Breast epithelium (tissue), 4 donors: ENCODE measurements at regions of chr13 and their contacts with region 1.

Region 1: GRCh38 chr13:108297114-108297513 is 27.6 kb downstream of the TNFSF13B start:
- DNase-seq: no peak
- H3K4me3 ChIP-seq: no peak overlapping the region
- H3K27ac ChIP-seq: no peak overlapping the region
- H3K4me1 ChIP-seq: no peaks in the 10 kb centered on the region
- H3K27me3 ChIP-seq: no peaks in the 10 kb centered on the region
- CTCF ChIP-seq: no peak
- POLR2A ChIP-seq: no peak

Region 2: GRCh38 chr13:108283110-108283509 is 14.0 kb before region 1 on chr13:
- intact Hi-C with region 1: no loop called
- DNase-seq: no peak
- H3K4me3 ChIP-seq: no peak overlapping the region
- H3K27ac ChIP-seq: no peak overlapping the region
- H3K4me1 ChIP-seq: no peaks in the 10 kb centered on the region
- H3K27me3 ChIP-seq: no peaks in the 10 kb centered on the region
- CTCF ChIP-seq: no peak
- POLR2A ChIP-seq: no peak

Region 3: GRCh38 chr13:108328848-108329247 is 31.7 kb after region 1 on chr13:
- intact Hi-C with region 1: loop called (anchors 2 kb)
- DNase-seq: no peak
- H3K4me3 ChIP-seq: no peak overlapping the region
- H3K27ac ChIP-seq: no peak overlapping the region
- H3K4me1 ChIP-seq: no peaks in the 10 kb centered on the region
- H3K27me3 ChIP-seq: peaks cover 0 to 10% of the 10 kb centered on the region in 2 donors
- CTCF ChIP-seq: no peak
- POLR2A ChIP-seq: no peak